CD4-positive, alpha-beta memory T cell (primary cell): ENCODE measurements at regions of chr14 and their contacts with region 1.

Region 1: GRCh38 chr14:96391293-96392118 is 422 bp upstream of the AK7 start:
- DNase-seq: peak; percentile 98 to 100 (median 99)
- H3K4me3 ChIP-seq: peak overlapping the region; percentile 78 to 82
- H3K4me3 Mint-ChIP-seq: peak overlapping the region; percentile 90 to 95 (median 92)
- H3K27ac ChIP-seq: peak overlapping the region; percentile 53
- H3K27ac Mint-ChIP-seq: peak overlapping the region; percentile 83 to 92 (median 88)
- H3K4me1 ChIP-seq: peaks cover 12% of the 10 kb centered on the region
- H3K4me1 Mint-ChIP-seq: peaks cover 2 to 7% (median 6%) of the 10 kb centered on the region in 4 donors
- H3K27me3 ChIP-seq: no peaks in the 10 kb centered on the region
- H3K27me3 Mint-ChIP-seq: no peaks in the 10 kb centered on the region

Region 2: DNA sequence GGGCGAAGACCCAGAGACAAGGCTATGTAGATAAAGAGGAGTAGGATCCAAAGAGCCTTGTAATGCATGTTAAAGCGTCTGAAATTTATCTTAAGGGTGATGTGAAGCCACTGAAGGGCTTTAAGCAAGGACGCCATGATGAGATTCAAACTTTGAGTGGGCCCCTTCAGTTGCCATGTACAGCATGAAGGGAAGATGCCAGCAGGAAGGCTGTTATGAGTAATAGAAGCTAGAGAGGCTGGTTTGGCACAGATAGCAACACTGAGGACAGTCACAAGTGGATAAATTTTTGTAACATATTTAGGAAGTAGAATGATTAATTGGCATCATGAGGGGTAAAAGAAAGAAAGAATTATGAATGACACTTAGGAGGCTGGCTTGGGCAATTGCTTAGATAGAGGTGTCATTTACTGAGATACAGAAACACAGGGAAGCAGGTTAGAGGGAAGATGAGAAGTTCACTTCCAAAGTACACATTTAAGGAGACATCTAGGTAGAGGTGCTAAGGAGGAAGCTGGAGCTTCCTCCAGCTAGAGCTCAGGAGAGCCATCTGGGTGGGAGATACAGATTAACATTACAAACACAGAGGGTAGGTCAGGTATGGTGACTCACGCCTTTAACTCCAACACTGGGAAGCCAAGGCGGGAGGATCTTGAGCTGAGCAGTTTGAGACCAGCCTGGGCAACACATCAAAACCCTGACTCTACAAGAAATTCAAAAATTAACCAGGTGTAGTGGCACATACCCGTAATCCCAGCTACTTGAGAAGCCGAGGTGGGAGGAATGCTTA is 42.0 kb before region 1 on chr14:
- CTCF ChIA-PET with region 1: no interaction called
- POLR2A ChIA-PET with region 1: no interaction called
- intact Hi-C with region 1: loop called (anchors 10 kb)
- DNase-seq: no peak
- H3K4me3 ChIP-seq: no peak overlapping the region
- H3K4me3 Mint-ChIP-seq: no peak overlapping the region
- H3K27ac ChIP-seq: no peak overlapping the region
- H3K27ac Mint-ChIP-seq: peak overlapping the region in 3 of 7 donors; percentile 12 to 20 (median 14)
- H3K4me1 ChIP-seq: no peaks in the 10 kb centered on the region
- H3K4me1 Mint-ChIP-seq: peaks cover 7 to 31% (median 18%) of the 10 kb centered on the region in 4 donors
- H3K27me3 ChIP-seq: no peaks in the 10 kb centered on the region
- H3K27me3 Mint-ChIP-seq: no peaks in the 10 kb centered on the region

Region 3: DNA sequence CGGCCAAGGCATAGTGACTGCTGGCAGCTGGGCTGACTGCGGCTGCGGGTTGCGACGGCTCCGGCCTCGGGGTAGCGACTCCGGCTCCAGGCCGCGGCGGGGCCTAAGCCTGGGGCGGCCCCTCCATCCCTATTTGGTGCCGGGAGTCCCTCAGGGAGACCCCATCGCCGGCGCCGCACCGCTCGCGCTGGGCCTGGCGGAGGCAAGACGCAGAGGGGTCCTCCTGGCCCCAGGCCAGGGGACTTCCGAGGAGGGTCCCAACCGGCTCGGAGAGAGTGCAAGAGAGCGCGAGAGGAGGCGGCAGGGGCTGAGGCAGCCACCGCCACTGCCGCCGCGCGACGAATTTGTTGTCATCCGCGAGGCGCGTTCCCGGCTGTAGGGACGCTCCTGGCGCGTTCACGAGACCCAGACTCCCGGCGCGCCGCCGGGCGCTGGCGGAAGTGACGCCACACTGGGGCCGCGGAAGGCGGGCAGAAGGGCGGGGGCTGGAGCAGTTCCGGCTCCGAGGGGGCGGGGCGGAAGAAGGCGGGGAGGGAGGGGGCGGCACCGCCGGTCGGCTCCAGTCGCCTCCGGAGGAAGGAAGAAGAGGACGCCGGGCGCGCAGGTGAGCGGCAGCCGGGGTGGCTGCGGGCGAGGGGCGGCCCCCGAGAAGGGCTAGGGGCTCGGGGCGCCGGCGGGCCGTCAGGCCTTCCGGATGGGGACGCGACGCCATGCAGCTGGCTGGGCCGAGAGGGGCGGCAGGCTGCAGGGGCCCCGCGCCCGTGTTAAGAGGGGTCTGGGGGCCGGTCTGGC is 28.3 kb before region 1 on chr14 and contains the starts of genes ATG2B and GSKIP:
- CTCF ChIA-PET with region 1: interaction called, 3 read pairs
- POLR2A ChIA-PET with region 1: interaction called, 31 read pairs
- intact Hi-C with region 1: loop called (anchors 1 kb)
- DNase-seq: peak; percentile 95 to 99 (median 97)
- H3K4me3 ChIP-seq: peak within 1 kb of the TSS; percentile 82 to 92
- H3K4me3 Mint-ChIP-seq: peak within 1 kb of the TSS; percentile 83 to 95 (median 92)
- H3K27ac ChIP-seq: peak within 1 kb of the TSS; percentile 97
- H3K27ac Mint-ChIP-seq: peak within 1 kb of the TSS; percentile 84 to 97 (median 94)
- H3K4me1 ChIP-seq: peaks cover 46% of the 10 kb centered on the region
- H3K4me1 Mint-ChIP-seq: peaks cover 36 to 59% (median 49%) of the 10 kb centered on the region in 4 donors
- H3K27me3 ChIP-seq: no peaks in the 10 kb centered on the region
- H3K27me3 Mint-ChIP-seq: no peaks in the 10 kb centered on the region
- total RNA-seq, gene ATG2B: 28.4 to 37.8 TPM
- total RNA-seq, gene GSKIP: 24.3 to 25.3 TPM

Region 4: DNA sequence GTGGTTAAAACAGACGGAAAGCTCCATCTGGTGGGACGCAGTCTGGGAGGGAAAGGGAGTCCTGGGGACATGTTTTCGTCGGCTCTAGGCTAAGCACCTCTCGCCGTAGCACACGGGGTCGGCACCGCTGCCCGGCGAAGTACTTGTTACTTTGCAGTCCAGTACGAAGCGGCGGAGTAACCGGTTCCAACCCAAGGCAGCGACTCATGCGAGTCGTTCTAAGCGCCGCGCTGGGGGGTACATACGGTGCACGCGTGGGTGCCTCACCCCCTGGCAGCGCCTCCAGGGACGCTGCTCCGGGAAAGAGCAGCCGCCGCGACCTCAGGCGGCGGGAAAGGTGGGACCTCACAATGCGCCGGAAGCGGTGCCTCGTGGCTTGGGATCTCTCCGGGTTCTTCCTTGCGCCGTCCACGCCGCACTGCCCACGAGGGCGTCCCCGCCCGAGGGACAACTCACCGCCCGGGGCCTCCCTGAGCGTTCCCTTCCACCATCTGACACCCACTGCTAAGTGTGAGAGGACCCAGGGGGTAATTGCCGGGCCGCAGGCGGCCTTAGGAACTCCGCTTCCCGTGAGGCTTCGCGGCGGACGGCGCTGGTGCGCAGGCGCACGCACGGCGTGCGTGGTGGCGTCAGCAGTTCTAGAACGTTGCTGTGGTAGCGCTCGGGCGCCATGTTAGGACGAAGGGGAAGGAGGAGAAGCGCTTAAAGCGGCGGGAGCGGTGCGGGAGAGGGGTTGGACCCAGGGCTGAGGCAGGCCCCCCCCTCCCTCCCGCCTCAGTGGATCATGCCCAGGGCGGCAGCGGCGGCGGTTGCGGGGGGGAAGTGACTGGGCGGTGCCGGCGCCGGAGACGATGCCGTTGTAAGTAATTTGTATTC is 110.5 kb after region 1 on chr14 and contains the start of gene PAPOLA:
- CTCF ChIA-PET with region 1: no interaction called
- POLR2A ChIA-PET with region 1: interaction called, 4 read pairs
- intact Hi-C with region 1: loop called (anchors 1 kb)
- DNase-seq: peak; percentile 94 to 96 (median 95)
- H3K4me3 ChIP-seq: peak within 1 kb of the TSS; percentile 83 to 88
- H3K4me3 Mint-ChIP-seq: peak within 1 kb of the TSS; percentile 94 to 99 (median 98)
- H3K27ac ChIP-seq: peak within 1 kb of the TSS; percentile 94
- H3K27ac Mint-ChIP-seq: peak within 1 kb of the TSS; percentile 95 to 100 (median 98)
- H3K4me1 ChIP-seq: peaks cover 45% of the 10 kb centered on the region
- H3K4me1 Mint-ChIP-seq: peaks cover 28 to 57% (median 43%) of the 10 kb centered on the region in 4 donors
- H3K27me3 ChIP-seq: no peaks in the 10 kb centered on the region
- H3K27me3 Mint-ChIP-seq: peaks cover 5 to 6% of the 10 kb centered on the region in 2 donors
- total RNA-seq, gene PAPOLA: 236 to 244 TPM

Region 5: DNA sequence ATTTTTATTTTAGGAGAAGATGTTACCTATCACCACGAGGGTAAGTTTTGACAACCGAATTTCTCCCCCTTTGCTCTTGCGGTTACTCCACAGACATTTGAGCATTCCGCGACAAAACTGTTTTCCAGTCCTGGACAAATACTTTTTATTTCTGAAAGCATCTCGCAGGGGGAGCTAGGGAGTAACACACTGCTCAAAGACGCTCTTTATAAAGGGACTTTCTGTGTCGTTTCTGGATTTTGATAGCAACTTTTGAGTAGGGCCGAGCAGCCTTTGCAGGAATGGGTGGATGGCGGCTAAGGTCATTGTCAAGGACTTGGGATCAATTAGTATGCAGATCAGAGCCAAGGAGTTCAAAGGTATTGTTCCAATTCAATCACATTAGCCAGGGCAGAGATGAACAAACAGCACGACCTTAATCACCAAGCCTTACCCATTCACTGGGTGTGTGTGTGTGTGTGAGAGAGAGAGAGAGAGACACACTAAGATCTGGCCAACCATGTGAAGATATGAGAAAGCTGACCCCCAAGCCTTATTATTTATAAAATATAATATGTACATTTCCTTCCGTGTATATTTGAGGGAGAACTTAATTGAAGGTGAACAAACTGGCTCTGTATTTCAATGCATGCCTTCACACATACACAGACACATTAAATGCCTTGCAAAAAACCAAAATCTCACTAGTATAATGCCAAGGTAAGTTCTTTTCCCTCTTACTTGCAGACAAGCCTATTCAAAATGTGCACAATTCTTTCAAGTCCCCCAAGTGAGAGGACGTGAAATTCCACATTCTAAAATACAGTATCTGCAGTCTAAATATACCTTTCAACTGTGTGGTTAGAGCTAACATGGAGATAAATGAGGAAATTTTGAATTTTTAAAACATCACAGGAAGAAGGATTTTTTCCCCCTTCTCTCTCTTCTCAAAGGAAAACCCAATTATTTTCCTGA is 1019.4 kb after region 1 on chr14:
- CTCF ChIA-PET with region 1: no interaction called
- POLR2A ChIA-PET with region 1: no interaction called
- intact Hi-C with region 1: no loop called
- DNase-seq: no peak
- H3K4me3 ChIP-seq: no peak overlapping the region
- H3K4me3 Mint-ChIP-seq: no peak overlapping the region
- H3K27ac ChIP-seq: no peak overlapping the region
- H3K27ac Mint-ChIP-seq: no peak overlapping the region
- H3K4me1 ChIP-seq: peaks cover 40% of the 10 kb centered on the region
- H3K4me1 Mint-ChIP-seq: peaks cover 24 to 30% (median 26%) of the 10 kb centered on the region in 4 donors
- H3K27me3 ChIP-seq: no peaks in the 10 kb centered on the region
- H3K27me3 Mint-ChIP-seq: peaks cover 0 to 1% of the 10 kb centered on the region in 2 donors